Activated naive CD4-positive, alpha-beta T cell treated with anti-CD3 and anti-CD28 coated beads for 36 hours (primary cell): ENCODE measurements at regions of chr22 and their contacts with region 1.

Region 1: DNA sequence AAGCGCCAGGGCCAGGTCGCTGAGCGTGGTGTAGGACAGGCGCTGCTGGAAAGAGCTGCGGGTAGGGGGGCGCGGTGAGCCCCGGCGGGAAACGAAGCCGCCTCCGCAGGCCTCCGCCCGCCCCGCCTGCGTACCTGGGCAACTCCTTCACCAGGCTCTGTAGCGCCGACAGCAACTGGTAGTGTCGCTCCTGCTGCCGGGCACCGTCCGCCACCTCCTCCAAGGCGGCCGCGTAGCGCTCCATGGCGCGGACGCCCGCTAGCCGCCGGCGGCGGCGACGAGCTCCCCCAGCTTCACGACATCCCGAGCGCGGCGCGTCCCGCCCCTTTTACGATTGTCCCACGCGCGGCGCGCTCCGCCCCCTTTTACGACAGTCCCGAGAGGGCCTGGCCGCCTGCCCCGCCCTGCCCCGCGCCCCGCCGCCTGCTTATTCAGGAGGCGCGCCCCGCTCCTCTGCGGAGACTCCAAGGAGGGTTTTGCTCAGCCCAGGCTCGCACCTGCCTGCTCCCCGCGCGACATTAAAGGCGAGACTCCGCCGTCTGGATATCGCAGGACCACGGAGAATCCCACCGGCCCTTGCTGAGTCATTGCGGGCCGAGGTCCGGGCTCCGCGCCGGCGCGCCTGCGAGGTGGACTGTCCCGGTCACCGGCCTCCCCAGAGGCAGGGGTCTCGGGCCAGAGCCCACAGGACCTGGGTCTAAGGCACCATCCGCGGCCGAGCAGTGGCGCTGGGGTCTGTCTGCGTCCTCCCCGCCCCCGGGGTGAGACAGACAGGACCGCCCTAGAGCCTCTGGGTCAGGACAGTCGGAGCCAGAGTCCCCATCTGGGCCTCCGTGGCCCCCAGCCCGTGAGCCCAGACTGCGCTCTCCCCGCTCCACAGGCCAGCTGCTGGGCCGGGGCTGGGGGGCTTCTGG is at the start of gene DGCR6L:
- DNase-seq: peak; percentile 97
- H3K4me3 Mint-ChIP-seq: peak within 1 kb of the TSS; percentile 92
- H3K27ac Mint-ChIP-seq: peak within 1 kb of the TSS; percentile 87
- H3K4me1 Mint-ChIP-seq: peaks cover 60% of the 10 kb centered on the region
- H3K27me3 Mint-ChIP-seq: no peaks in the 10 kb centered on the region
- total RNA-seq, gene DGCR6L: 21.5 TPM

Region 2: DNA sequence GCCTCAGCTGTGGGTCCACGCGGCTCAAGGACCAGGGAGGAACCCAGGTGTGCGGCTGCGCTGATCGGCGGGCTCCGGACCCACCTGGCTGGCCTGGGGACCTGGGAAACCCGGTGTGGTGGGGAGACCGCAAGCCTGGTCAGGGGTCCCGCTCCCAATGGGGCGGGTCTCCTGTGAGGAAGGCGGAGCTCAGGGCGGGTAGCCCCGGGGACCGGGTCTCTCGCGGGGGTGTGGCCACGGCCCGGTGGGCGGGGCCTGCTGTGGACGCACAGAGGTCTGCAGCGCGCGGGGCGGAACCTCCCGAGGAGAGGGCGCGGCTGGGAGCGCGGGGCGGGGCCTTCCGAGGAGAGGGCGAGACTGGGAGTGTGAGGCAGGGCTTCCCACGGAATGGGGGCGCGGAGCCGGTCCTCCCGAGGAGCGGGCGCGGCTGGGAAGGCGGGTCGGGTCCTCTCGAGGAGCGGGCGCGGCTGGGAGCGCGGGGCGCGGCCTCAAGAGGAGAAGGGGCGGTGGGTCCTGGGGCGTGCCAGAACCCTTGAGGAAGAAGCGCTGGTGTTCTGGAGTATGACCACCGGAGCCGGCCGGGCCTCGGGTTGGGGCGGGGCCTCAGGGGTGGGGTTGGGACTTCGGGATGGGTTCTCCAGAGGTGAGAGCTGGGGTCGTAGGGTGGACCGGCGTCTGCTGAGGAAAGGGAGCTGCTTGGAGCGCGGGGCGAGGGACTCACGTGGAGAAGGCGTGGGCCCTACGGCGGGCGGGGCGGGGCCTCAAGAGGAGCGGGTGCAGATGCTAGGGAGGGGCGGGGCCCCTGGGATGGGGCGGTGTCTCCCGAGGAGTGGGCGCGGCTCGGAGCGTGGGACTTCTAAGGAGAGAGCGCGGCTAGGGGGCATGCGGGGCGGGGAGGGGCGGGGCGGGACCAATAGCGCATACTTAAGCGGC is 20.9 kb before region 1 on chr22:
- CTCF ChIA-PET with region 1: interaction called, 4 read pairs
- intact Hi-C with region 1: loop called (anchors 1 kb)
- DNase-seq: peak; percentile 84
- H3K4me3 Mint-ChIP-seq: peak overlapping the region; percentile 73
- H3K27ac Mint-ChIP-seq: no peak overlapping the region
- H3K4me1 Mint-ChIP-seq: peaks cover 2% of the 10 kb centered on the region
- H3K27me3 Mint-ChIP-seq: peaks cover 6% of the 10 kb centered on the region

Region 3: GRCh38 chr22:20393909-20394691 is 74.1 kb after region 1 on chr22 and contains the start of gene ZNF74:
- CTCF ChIA-PET with region 1: interaction called, 4 read pairs
- intact Hi-C with region 1: loop called (anchors 10 kb)
- DNase-seq: peak; percentile 90
- H3K4me3 Mint-ChIP-seq: peak within 1 kb of the TSS; percentile 86
- H3K27ac Mint-ChIP-seq: peak within 1 kb of the TSS; percentile 88
- H3K4me1 Mint-ChIP-seq: peaks cover 30% of the 10 kb centered on the region
- H3K27me3 Mint-ChIP-seq: no peaks in the 10 kb centered on the region
- total RNA-seq, gene ZNF74: 7.9 to 8.0 TPM

Region 4: DNA sequence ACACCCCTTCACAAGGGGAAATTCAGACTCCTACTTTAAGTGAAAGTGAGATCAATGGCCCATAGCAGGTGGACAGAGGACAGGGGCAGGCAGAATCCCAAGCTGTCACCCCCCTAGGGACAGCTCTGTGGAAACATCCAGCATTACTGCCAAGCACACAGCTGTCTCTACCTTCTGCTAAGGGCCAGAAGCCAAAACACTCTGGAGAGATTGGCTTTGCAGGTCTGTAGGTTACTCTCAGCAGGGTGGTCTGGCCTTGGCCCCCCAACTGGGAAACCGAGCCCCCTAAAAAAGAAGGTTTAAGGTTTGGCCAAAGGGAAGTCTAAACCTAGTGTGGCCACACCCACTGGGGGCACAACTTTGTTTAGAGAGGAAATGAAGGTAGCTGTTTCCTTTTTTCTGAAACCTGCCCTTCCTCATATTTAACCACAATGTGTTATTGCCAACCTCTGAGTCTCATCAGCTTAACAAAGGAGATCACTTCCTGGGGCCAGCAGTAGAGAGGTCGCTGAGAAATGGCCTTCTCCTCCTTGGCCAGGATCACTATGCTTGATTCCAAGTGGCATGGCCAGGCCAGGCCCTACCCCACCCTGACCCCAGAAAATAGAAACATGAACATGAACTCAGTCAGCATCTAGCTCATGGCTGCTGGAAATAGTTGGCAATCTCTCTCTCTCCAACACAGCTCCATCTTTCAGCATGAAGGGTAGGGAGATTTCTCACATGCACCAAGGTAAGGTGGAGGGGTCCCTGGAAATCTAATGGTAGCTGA is 143.5 kb after region 1 on chr22:
- CTCF ChIA-PET with region 1: no interaction called
- intact Hi-C with region 1: loop called (anchors 5 kb)
- DNase-seq: peak; percentile 34
- H3K4me3 Mint-ChIP-seq: peak overlapping the region; percentile 16
- H3K27ac Mint-ChIP-seq: peak overlapping the region; percentile 87
- H3K4me1 Mint-ChIP-seq: peaks cover 53% of the 10 kb centered on the region
- H3K27me3 Mint-ChIP-seq: no peaks in the 10 kb centered on the region